ENCODE measurements at regions of chr11 and their contacts with region 1.

Region 1: GRCh38 chr11:118046051-118046963 is 30.6 kb upstream of the TMPRSS4 start:
- DNase-seq: peak; percentile 12
- H3K4me3 Mint-ChIP-seq: peak overlapping the region; percentile 52
- H3K27ac Mint-ChIP-seq: peak overlapping the region; percentile 93
- H3K4me1 Mint-ChIP-seq: peaks cover 86% of the 10 kb centered on the region
- H3K27me3 Mint-ChIP-seq: no peaks in the 10 kb centered on the region

Region 2: GRCh38 chr11:117817368-117818040 is 228.8 kb before region 1 on chr11:
- intact Hi-C with region 1: loop called (anchors 1 kb)
- DNase-seq: peak; percentile 83
- H3K4me3 Mint-ChIP-seq: peak overlapping the region; percentile 70
- H3K27ac Mint-ChIP-seq: peak overlapping the region; percentile 98
- H3K4me1 Mint-ChIP-seq: peaks cover 79% of the 10 kb centered on the region
- H3K27me3 Mint-ChIP-seq: no peaks in the 10 kb centered on the region

Region 3: GRCh38 chr11:118002541-118003423 is 43.5 kb before region 1 on chr11:
- intact Hi-C with region 1: loop called (anchors 1 kb)
- DNase-seq: peak; percentile 50
- H3K4me3 Mint-ChIP-seq: peak overlapping the region; percentile 61
- H3K27ac Mint-ChIP-seq: peak overlapping the region; percentile 98
- H3K4me1 Mint-ChIP-seq: peaks cover 92% of the 10 kb centered on the region
- H3K27me3 Mint-ChIP-seq: no peaks in the 10 kb centered on the region

Region 4: DNA sequence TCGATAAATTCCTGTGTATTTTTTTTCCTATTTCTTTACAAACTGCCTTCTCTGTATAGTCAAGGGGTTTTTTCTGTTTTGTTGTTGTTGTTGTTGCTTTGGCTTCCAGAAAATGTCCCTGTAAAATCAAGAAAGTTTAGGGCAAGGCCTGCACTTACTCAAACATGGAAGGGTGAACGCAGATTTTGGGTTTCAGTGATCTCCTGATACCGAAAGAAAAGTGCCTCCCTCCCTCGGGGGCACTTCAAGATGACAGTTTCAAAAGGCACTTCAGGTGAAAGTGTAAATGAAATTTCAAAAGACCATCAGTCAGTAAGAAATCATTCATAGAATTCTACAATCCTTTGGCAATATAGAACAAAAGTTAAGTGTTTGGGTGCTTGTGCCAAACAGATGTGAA is 12.9 kb before region 1 on chr11:
- intact Hi-C with region 1: loop called (anchors 1 kb)
- DNase-seq: no peak
- H3K4me3 Mint-ChIP-seq: peak overlapping the region; percentile 31
- H3K27ac Mint-ChIP-seq: peak overlapping the region; percentile 52
- H3K4me1 Mint-ChIP-seq: peaks cover 40% of the 10 kb centered on the region
- H3K27me3 Mint-ChIP-seq: no peaks in the 10 kb centered on the region

Region 5: GRCh38 chr11:118117790-118118601 is 71.7 kb after region 1 on chr11:
- intact Hi-C with region 1: no loop called
- DNase-seq: no peak
- H3K4me3 Mint-ChIP-seq: no peak overlapping the region
- H3K27ac Mint-ChIP-seq: no peak overlapping the region
- H3K4me1 Mint-ChIP-seq: peaks cover 21% of the 10 kb centered on the region
- H3K27me3 Mint-ChIP-seq: peaks cover 23% of the 10 kb centered on the region

Region 6: DNA sequence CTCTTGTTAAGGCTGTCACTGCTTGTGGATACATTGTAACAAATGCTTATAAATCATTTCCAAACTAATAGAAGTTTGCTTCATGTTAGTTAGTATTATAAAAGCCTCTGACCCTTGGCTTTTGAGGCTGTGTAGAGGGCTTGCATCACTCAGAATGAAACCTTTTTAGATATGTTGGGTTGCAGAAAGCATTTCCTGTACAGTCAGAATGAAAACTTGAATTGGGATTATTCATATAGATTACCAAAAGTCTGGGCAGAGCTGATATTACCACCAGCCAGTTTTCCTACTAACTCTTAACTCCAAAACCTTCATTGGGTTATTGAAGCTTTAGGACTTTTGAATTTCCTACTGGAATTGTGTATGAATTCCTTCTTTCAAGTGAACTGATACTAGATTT is 402.0 kb after region 1 on chr11:
- intact Hi-C with region 1: loop called (anchors 2 kb)
- DNase-seq: no peak
- H3K4me3 Mint-ChIP-seq: peak overlapping the region; percentile 6
- H3K27ac Mint-ChIP-seq: peak overlapping the region; percentile 22
- H3K4me1 Mint-ChIP-seq: peaks cover 73% of the 10 kb centered on the region
- H3K27me3 Mint-ChIP-seq: no peaks in the 10 kb centered on the region